ENCODE measurements at regions of chr1 and their contacts with region 1.

Region 1: DNA sequence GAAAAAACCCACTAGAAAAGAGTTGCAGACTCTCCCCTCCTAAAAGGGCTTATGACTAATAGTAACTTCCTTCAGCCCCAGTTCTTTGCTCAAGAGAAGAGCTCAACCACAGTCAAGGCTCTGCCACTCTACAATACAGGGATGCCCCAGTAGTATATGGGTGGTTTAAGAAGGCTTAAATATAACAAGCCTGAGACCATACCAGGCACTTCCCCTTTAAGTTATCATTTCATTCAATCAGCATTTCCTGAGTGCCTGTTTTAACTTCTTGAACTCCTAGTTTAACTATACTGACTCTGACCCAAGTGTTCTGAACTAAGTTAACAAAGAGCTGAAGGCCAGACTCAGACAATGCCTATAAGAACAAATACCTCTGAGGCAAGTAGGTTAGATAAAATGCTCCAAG is 19.8 kb downstream of the PRPF38A start:
- DNase-seq: peak; percentile 34
- H3K4me3 Mint-ChIP-seq: peak overlapping the region; percentile 7
- H3K27ac Mint-ChIP-seq: peak overlapping the region; percentile 77
- H3K4me1 Mint-ChIP-seq: peaks cover 45% of the 10 kb centered on the region
- H3K27me3 Mint-ChIP-seq: no peaks in the 10 kb centered on the region

Region 2: DNA sequence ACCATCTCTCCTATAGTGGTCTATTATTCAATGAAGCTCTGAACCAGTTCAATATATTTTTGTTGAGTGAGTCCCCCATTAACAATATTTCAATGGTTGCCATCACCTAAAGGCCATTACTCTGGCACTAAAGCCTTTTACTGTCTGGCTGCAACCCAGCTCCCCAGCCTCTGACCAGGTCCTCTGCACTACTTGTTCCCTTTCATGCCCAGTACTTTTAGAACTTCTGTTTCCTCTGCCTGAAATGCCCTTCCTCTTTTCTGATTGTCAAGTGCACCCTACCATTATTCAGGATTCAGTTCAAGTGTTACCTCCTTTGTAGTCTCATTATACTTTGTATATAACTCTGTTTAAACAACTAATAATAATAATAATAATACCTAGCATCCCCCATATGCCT is 312.7 kb before region 1 on chr1:
- CTCF ChIA-PET with region 1: no interaction called
- POLR2A ChIA-PET with region 1: no interaction called
- intact Hi-C with region 1: no loop called
- DNase-seq: no peak
- H3K4me3 Mint-ChIP-seq: no peak overlapping the region
- H3K27ac Mint-ChIP-seq: no peak overlapping the region
- H3K4me1 Mint-ChIP-seq: no peaks in the 10 kb centered on the region
- H3K27me3 Mint-ChIP-seq: no peaks in the 10 kb centered on the region

Region 3: DNA sequence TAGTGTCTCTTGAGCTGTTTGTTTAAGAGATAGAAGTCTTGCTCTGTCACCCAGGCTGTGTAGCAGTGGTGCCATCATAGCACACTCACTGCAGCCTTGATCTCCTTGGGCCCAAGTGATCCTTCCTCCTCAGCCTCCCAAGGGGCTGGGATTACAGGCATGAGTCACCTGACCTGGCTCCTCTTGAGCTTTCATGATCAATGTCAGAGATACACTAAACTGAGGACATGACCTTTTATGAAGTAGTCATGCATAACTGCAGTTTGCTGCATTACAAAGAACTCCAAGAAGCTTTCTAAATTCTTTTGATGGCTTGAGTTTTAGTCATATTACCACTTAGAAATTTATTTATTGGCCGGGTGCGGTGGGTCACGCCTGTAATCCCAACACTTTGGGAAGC is 135.9 kb before region 1 on chr1:
- CTCF ChIA-PET with region 1: no interaction called
- POLR2A ChIA-PET with region 1: no interaction called
- intact Hi-C with region 1: no loop called
- DNase-seq: no peak
- H3K4me3 Mint-ChIP-seq: no peak overlapping the region
- H3K27ac Mint-ChIP-seq: no peak overlapping the region
- H3K4me1 Mint-ChIP-seq: no peaks in the 10 kb centered on the region
- H3K27me3 Mint-ChIP-seq: no peaks in the 10 kb centered on the region

Region 4: GRCh38 chr1:52520148-52520547 is 95.9 kb after region 1 on chr1:
- CTCF ChIA-PET with region 1: no interaction called
- POLR2A ChIA-PET with region 1: interaction called, 3 read pairs
- intact Hi-C with region 1: loop called (anchors 5 kb)
- DNase-seq: peak; percentile 14
- H3K4me3 Mint-ChIP-seq: no peak overlapping the region
- H3K27ac Mint-ChIP-seq: peak overlapping the region; percentile 71
- H3K4me1 Mint-ChIP-seq: peaks cover 49% of the 10 kb centered on the region
- H3K27me3 Mint-ChIP-seq: no peaks in the 10 kb centered on the region

Measured in activated CD4-positive, alpha-beta memory T cell treated with anti-CD3 and anti-CD28 coated beads for 36 hours (primary cell).